Breast epithelium (tissue), 4 donors: ENCODE measurements at regions of chr11 and their contacts with region 1.

Region 1: DNA sequence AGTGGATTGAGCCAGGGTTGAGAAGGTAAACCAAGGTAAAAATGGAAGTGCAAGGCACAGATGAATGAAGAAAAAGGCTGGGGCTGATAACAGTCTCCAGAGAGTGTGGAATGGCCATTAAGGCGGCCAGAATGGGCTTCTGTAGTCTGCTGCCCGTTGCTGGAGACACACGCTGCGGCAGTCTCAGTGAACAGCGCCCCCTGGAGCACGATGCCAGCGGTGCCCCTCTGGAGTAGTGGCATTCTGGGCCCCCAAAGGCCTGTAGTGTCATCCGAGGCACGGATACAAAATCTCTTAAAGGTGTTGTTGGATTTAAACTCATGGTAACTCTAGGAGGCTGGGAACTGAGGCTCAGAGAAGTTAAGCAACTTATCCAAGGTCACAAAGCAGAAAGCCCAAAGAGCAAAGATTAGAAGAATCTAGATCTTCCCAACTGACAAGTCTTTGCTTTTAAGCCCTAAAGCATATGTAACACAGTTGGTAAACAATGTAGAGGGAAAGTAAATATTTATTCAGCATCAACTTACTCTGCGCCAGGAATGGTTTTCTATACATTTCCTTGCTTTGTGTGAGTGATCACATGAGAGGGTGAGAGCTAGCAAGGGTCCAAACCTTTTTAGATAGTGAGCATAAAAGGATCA is 18.2 kb downstream of the KCNJ1 start:
- DNase-seq: no peak
- H3K4me3 ChIP-seq: no peak overlapping the region
- H3K27ac ChIP-seq: no peak overlapping the region
- H3K4me1 ChIP-seq: no peaks in the 10 kb centered on the region
- H3K27me3 ChIP-seq: peaks cover 0 to 7% of the 10 kb centered on the region in 2 donors
- CTCF ChIP-seq: peak in 1 of 3 donors; percentile 48
- POLR2A ChIP-seq: no peak

Region 2: DNA sequence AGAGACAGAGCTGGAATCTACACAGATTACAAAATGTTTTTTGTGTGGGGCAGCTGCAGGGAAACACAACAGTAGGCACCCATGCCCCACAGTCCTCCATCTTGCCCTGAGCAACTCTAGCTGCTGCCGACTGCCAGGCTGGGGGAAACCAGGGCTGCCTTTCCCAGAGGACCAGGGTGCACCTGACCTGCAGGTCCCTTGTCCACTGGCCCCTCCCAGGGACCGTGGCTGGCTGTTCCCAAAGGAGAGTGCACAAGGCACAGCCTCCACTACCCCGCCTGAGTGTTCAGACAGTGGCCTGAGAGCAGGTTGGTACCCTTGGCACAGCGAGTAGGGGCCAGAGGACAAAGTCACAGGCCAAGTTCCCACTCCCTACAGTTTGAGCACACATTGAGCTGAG is 708.5 kb after region 1 on chr11:
- intact Hi-C with region 1: loop called (anchors 5 kb)
- DNase-seq: no peak
- H3K4me3 ChIP-seq: no peak overlapping the region
- H3K27ac ChIP-seq: no peak overlapping the region
- H3K4me1 ChIP-seq: no peaks in the 10 kb centered on the region
- H3K27me3 ChIP-seq: no peaks in the 10 kb centered on the region
- CTCF ChIP-seq: no peak
- POLR2A ChIP-seq: no peak